Sigmoid colon (tissue), 7 donors: ENCODE measurements at regions of chr20 and their contacts with region 1.

Region 1: GRCh38 chr20:37527638-37528441 is at the start of gene BLCAP:
- DNase-seq: peak; percentile 94
- H3K4me3 ChIP-seq: peak within 1 kb of the TSS; percentile 95 to 99 (median 98)
- H3K27ac ChIP-seq: peak within 1 kb of the TSS; percentile 92 to 99 (median 97)
- H3K4me1 ChIP-seq: peaks cover 0 to 47% (median 41%) of the 10 kb centered on the region in 4 donors
- H3K27me3 ChIP-seq: no peaks in the 10 kb centered on the region
- CTCF ChIP-seq: no peak
- EP300 ChIP-seq: no peak
- POLR2A ChIP-seq: peak; percentile 92
- total RNA-seq, gene BLCAP: 53.1 to 68.1 (median 57.1) TPM

Region 2: GRCh38 chr20:37178839-37179670 is 348.8 kb before region 1 on chr20 and contains the starts of genes MROH8 and RPN2:
- intact Hi-C with region 1: loop called (anchors 2 kb)
- DNase-seq: peak; percentile 99
- H3K4me3 ChIP-seq: peak within 1 kb of the TSS; percentile 69 to 93 (median 74)
- H3K27ac ChIP-seq: peak within 1 kb of the TSS; percentile 95 to 98 (median 98)
- H3K4me1 ChIP-seq: peaks cover 0 to 45% (median 32%) of the 10 kb centered on the region in 4 donors
- H3K27me3 ChIP-seq: no peaks in the 10 kb centered on the region
- CTCF ChIP-seq: no peak
- EP300 ChIP-seq: no peak
- POLR2A ChIP-seq: peak; percentile 29 to 46
- total RNA-seq, gene MROH8: 1.8 to 11.1 (median 5.1) TPM
- total RNA-seq, gene RPN2: 65.8 to 81.7 (median 76.1) TPM

Region 3: GRCh38 chr20:37270576-37271420 is 257.0 kb before region 1 on chr20:
- intact Hi-C with region 1: loop called (anchors 2 kb)
- DNase-seq: no peak
- H3K4me3 ChIP-seq: no peak overlapping the region
- H3K27ac ChIP-seq: no peak overlapping the region
- H3K4me1 ChIP-seq: no peaks in the 10 kb centered on the region
- H3K27me3 ChIP-seq: no peaks in the 10 kb centered on the region
- CTCF ChIP-seq: no peak
- EP300 ChIP-seq: no peak
- POLR2A ChIP-seq: no peak

Region 4: GRCh38 chr20:37282556-37282955 is 245.3 kb before region 1 on chr20:
- intact Hi-C with region 1: loop called (anchors 2 kb)
- DNase-seq: peak; percentile 82
- H3K4me3 ChIP-seq: no peak overlapping the region
- H3K27ac ChIP-seq: peak overlapping the region; percentile 34 to 71 (median 67)
- H3K4me1 ChIP-seq: peaks cover 0 to 9% (median 4%) of the 10 kb centered on the region in 4 donors
- H3K27me3 ChIP-seq: no peaks in the 10 kb centered on the region
- CTCF ChIP-seq: peak; percentile 62 to 82 (median 66)
- EP300 ChIP-seq: no peak
- POLR2A ChIP-seq: no peak

Region 5: GRCh38 chr20:37384683-37385174 is 143.1 kb before region 1 on chr20:
- intact Hi-C with region 1: loop called (anchors 5 kb)
- DNase-seq: peak; percentile 84
- H3K4me3 ChIP-seq: peak overlapping the region; percentile 10 to 54 (median 48)
- H3K27ac ChIP-seq: peak overlapping the region in 3 of 4 donors; percentile 43 to 71 (median 69)
- H3K4me1 ChIP-seq: peaks cover 0 to 23% (median 17%) of the 10 kb centered on the region in 4 donors
- H3K27me3 ChIP-seq: no peaks in the 10 kb centered on the region
- CTCF ChIP-seq: peak; percentile 88 to 96 (median 90)
- EP300 ChIP-seq: no peak
- POLR2A ChIP-seq: no peak

Region 6: GRCh38 chr20:37406010-37406998 is 121.5 kb before region 1 on chr20:
- intact Hi-C with region 1: loop called (anchors 2 kb)
- DNase-seq: no peak
- H3K4me3 ChIP-seq: peak overlapping the region in 3 of 4 donors; percentile 18 to 42 (median 40)
- H3K27ac ChIP-seq: peak overlapping the region in 1 of 4 donors; percentile 46
- H3K4me1 ChIP-seq: peaks cover 0 to 30% (median 27%) of the 10 kb centered on the region in 4 donors
- H3K27me3 ChIP-seq: peaks cover 0 to 5% (median 0%) of the 10 kb centered on the region in 3 donors
- CTCF ChIP-seq: no peak
- EP300 ChIP-seq: no peak
- POLR2A ChIP-seq: no peak